MCF 10A (cell line): ENCODE measurements at regions of chr20 and their contacts with region 1.

Region 1: GRCh38 chr20:478949-479429 is 16.7 kb upstream of the TBC1D20 start:
- DNase-seq: peak; percentile 71
- H3K4me3 Mint-ChIP-seq: no peak overlapping the region
- H3K27ac Mint-ChIP-seq: no peak overlapping the region
- H3K4me1 Mint-ChIP-seq: peaks cover 11% of the 10 kb centered on the region
- H3K27me3 Mint-ChIP-seq: no peaks in the 10 kb centered on the region
- CTCF ChIP-seq: peak; percentile 51

Region 2: GRCh38 chr20:438571-439469 is 40.2 kb before region 1 on chr20:
- CTCF ChIA-PET with region 1: interaction called, 18 read pairs
- POLR2A ChIA-PET with region 1: interaction called, 4 read pairs
- intact Hi-C with region 1: no loop called
- DNase-seq: no peak
- H3K4me3 Mint-ChIP-seq: no peak overlapping the region
- H3K27ac Mint-ChIP-seq: no peak overlapping the region
- H3K4me1 Mint-ChIP-seq: peaks cover under 1% of the 10 kb centered on the region
- H3K27me3 Mint-ChIP-seq: no peaks in the 10 kb centered on the region
- CTCF ChIP-seq: no peak

Region 3: DNA sequence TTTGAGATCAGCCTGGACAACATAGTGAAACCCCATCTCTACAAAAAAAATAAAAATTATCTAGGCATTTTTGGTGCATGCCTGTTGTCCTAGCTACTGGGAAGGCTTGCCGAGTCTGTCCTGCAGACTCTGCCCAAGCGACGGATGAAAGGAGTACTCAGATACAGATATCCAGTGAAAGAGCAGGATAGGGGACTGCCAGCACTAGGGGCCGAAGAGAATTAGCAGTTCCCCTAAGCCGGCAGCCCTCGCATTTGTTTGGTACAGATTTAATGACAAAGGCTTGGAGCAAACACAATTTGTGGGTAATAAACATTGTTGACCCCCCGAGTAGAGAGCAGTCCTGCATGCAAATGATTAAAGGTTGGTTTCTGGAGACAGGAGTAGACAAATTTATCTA is 11.2 kb before region 1 on chr20:
- CTCF ChIA-PET with region 1: interaction called, 10 read pairs
- POLR2A ChIA-PET with region 1: interaction called, 13 read pairs
- intact Hi-C with region 1: no loop called
- DNase-seq: no peak
- H3K4me3 Mint-ChIP-seq: no peak overlapping the region
- H3K27ac Mint-ChIP-seq: no peak overlapping the region
- H3K4me1 Mint-ChIP-seq: peaks cover 6% of the 10 kb centered on the region
- H3K27me3 Mint-ChIP-seq: peaks cover 21% of the 10 kb centered on the region
- CTCF ChIP-seq: no peak

Region 4: DNA sequence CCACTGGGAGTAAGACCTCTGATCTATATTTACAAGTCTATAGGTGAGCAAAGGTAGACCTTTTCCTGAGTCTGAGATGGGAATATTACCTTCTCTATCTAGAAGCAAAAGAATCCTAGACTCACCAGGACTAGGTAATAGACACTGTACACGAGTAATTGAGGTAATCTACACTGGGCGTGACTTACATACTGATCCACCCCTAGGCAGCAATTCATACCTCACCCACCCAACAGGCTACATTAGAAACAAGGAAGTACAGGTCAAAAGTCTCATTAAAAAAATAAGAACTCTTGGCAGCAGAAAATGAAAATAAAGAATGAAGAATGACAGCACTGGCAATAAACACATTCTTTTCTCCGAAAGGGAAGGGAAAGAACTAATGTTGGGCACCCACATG is 57.0 kb after region 1 on chr20:
- CTCF ChIA-PET with region 1: no interaction called
- POLR2A ChIA-PET with region 1: no interaction called
- intact Hi-C with region 1: no loop called
- DNase-seq: no peak
- H3K4me3 Mint-ChIP-seq: peak overlapping the region; percentile 44
- H3K27ac Mint-ChIP-seq: no peak overlapping the region
- H3K4me1 Mint-ChIP-seq: peaks cover 39% of the 10 kb centered on the region
- H3K27me3 Mint-ChIP-seq: no peaks in the 10 kb centered on the region
- CTCF ChIP-seq: no peak